ENCODE measurements at regions of chr2 and their contacts with region 1.

Region 1: GRCh38 chr2:117835990-117836760 is 21.7 kb downstream of the DDX18 start:
- DNase-seq: peak; percentile 76
- ATAC-seq: peak; percentile 95
- H3K4me3 ChIP-seq: peak overlapping the region; percentile 39; the same call in 1 of the 2 replicates
- H3K27ac ChIP-seq: no peak overlapping the region
- H3K4me1 ChIP-seq: no peaks in the 10 kb centered on the region
- H3K27me3 ChIP-seq: no peaks in the 10 kb centered on the region
- CTCF ChIP-seq: peak; percentile 88
- POLR2A ChIP-seq: no peak
- RAD21 ChIP-seq: peak; percentile 85

Region 2: DNA sequence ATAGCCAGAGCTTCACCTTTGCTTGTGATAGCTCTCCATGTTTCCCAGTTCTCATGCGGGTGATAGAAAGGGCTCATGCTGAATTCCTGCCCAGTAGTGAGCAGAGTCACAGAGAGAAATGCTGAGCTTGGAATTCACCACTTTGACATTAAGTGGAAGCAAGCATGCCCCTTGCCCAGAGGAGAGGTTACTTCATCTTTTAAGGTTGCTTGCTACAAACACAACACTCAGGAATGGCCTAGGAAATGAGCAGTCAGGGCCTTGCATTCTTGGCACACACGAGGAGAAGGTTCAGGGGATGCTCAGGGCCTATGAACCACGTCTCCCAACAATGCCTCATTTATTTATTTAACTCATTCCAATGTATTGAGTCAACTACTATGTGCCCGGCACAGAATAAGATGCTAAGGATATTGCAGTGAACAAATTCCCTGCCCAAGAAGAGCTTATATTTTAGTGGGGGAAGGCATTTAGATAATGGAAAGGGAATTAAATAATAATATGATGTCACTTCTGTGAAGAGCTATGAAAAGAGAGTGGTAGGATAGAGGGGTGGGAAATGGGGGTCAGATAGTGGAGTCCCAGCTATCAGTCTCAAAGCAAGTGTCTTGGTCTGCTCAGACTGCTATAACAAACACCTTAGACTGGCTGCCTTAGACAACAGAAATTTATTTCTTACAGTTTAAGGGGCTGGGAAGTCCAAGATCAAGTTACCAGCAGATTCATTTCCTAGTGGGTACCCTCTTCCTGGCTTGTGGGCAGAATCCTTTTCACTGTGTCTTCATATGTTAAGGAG is 20.4 kb after region 1 on chr2:
- CTCF ChIA-PET with region 1: interaction called, 7 read pairs
- POLR2A ChIA-PET with region 1: no interaction called
- dilution Hi-C with region 1: no loop called
- in situ Hi-C with region 1: no loop called
- intact Hi-C with region 1: loop called (anchors 1 kb)
- DNase-seq: peak; percentile 96
- ATAC-seq: peak; percentile 95
- H3K4me3 ChIP-seq: no peak overlapping the region
- H3K27ac ChIP-seq: peak overlapping the region; percentile 18
- H3K4me1 ChIP-seq: peaks cover 3% of the 10 kb centered on the region; the same call in 1 of the 2 replicates
- H3K27me3 ChIP-seq: peaks cover 9% of the 10 kb centered on the region; the same call in 1 of the 2 replicates
- CTCF ChIP-seq: no peak
- POLR2A ChIP-seq: no peak
- RAD21 ChIP-seq: no peak

Region 3: GRCh38 chr2:117917223-117917917 is 81.2 kb after region 1 on chr2:
- CTCF ChIA-PET with region 1: interaction called, 3 read pairs
- POLR2A ChIA-PET with region 1: no interaction called
- dilution Hi-C with region 1: no loop called
- in situ Hi-C with region 1: no loop called
- intact Hi-C with region 1: loop called (anchors 1 kb)
- DNase-seq: peak; percentile 24
- ATAC-seq: peak; percentile 59
- H3K4me3 ChIP-seq: no peak overlapping the region
- H3K27ac ChIP-seq: no peak overlapping the region
- H3K4me1 ChIP-seq: no peaks in the 10 kb centered on the region
- H3K27me3 ChIP-seq: no peaks in the 10 kb centered on the region
- CTCF ChIP-seq: peak; percentile 37
- POLR2A ChIP-seq: no peak
- RAD21 ChIP-seq: peak; percentile 40; the same call in 1 of the 2 replicates

Region 4: DNA sequence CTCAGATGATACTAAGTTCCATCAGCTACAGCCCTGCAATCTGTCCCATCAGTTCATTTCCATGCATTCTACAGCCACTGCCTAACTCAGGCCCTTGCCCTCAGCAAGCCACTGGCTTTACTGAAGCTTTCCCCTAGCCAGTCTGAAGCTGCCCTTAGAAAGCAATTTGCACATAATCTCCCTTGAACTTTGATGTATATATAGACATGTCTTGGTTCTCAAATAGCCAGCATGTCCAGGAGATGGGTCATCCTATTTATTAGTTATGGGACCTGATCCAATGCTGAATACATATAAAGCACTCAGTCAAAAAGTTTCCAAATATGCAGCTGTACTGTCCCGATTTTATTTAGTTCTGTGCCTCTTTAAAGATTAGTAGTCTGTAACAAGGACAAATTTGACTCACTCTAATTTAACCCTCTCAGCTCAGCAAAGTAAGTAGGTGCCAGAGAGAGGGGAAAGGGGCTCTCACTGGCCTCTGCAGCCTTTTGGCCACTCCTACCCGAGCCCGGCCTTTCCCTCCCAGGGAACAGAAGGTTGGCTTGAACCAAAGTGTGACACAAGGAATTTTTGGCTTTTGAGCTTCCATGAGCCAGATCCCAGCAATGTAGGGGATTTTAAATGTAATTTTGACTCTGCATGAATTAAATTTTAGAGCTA is 107.0 kb after region 1 on chr2:
- CTCF ChIA-PET with region 1: interaction called, 3 read pairs
- POLR2A ChIA-PET with region 1: no interaction called
- dilution Hi-C with region 1: no loop called
- in situ Hi-C with region 1: no loop called
- intact Hi-C with region 1: loop called (anchors 2 kb)
- DNase-seq: peak; percentile 79
- ATAC-seq: peak; percentile 88
- H3K4me3 ChIP-seq: no peak overlapping the region
- H3K27ac ChIP-seq: 0 out of 2 replicates have a peak overlapping the region, but pooled peaks have one; percentile 10
- H3K4me1 ChIP-seq: peaks cover 8% of the 10 kb centered on the region
- H3K27me3 ChIP-seq: no peaks in the 10 kb centered on the region
- CTCF ChIP-seq: no peak
- POLR2A ChIP-seq: no peak
- RAD21 ChIP-seq: no peak

Region 5: GRCh38 chr2:118403658-118404451 is 567.7 kb after region 1 on chr2:
- CTCF ChIA-PET with region 1: no interaction called
- POLR2A ChIA-PET with region 1: no interaction called
- dilution Hi-C with region 1: no loop called
- in situ Hi-C with region 1: no loop called
- intact Hi-C with region 1: no loop called
- DNase-seq: no peak
- ATAC-seq: no peak
- H3K4me3 ChIP-seq: no peak overlapping the region
- H3K27ac ChIP-seq: no peak overlapping the region
- H3K4me1 ChIP-seq: no peaks in the 10 kb centered on the region
- H3K27me3 ChIP-seq: no peaks in the 10 kb centered on the region
- CTCF ChIP-seq: no peak
- POLR2A ChIP-seq: no peak
- RAD21 ChIP-seq: no peak